Activated B cell treated with CpG ODN at 0.5 μM for 24 hours (primary cell): ENCODE measurements at regions of chr4 and their contacts with region 1.

Region 1: GRCh38 chr4:53748328-53748772 is 157.1 kb upstream of the LNX1 start:
- DNase-seq: peak; percentile 46
- ATAC-seq: peak; percentile 94
- H3K4me3 Mint-ChIP-seq: peak overlapping the region; percentile 7
- H3K27ac Mint-ChIP-seq: peak overlapping the region; percentile 84
- H3K4me1 Mint-ChIP-seq: peaks cover 63% of the 10 kb centered on the region
- H3K27me3 Mint-ChIP-seq: no peaks in the 10 kb centered on the region
- CTCF ChIP-seq: no peak

Region 2: GRCh38 chr4:53313510-53313909 is 434.8 kb before region 1 on chr4:
- CTCF ChIA-PET with region 1: no interaction called
- POLR2A ChIA-PET with region 1: no interaction called
- intact Hi-C with region 1: no loop called
- DNase-seq: no peak
- ATAC-seq: no peak
- H3K4me3 Mint-ChIP-seq: no peak overlapping the region
- H3K27ac Mint-ChIP-seq: no peak overlapping the region
- H3K4me1 Mint-ChIP-seq: peaks cover 2% of the 10 kb centered on the region
- H3K27me3 Mint-ChIP-seq: no peaks in the 10 kb centered on the region
- CTCF ChIP-seq: no peak

Region 3: DNA sequence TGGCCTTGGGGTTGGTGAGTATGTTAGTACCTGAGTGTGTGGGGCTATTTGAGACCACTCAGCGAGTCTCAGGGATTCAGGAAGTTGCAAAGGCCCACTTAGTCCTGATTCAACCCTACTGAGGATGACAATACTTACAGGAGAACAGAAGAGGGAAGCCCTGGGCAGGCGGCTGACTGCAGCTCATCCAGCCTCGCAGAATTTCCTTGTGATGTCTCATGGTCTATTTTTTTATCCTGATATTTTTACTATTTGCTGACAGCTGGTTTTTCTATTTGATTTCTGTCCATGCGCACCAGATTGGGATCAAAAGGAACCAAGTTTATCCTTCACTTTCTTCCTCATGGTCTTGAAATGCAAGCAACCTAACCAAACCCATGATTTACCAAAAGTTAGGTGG is 44.7 kb after region 1 on chr4:
- CTCF ChIA-PET with region 1: no interaction called
- POLR2A ChIA-PET with region 1: no interaction called
- intact Hi-C with region 1: no loop called
- DNase-seq: no peak
- ATAC-seq: no peak
- H3K4me3 Mint-ChIP-seq: no peak overlapping the region
- H3K27ac Mint-ChIP-seq: no peak overlapping the region
- H3K4me1 Mint-ChIP-seq: no peaks in the 10 kb centered on the region
- H3K27me3 Mint-ChIP-seq: peaks cover 11% of the 10 kb centered on the region
- CTCF ChIP-seq: no peak

Region 4: DNA sequence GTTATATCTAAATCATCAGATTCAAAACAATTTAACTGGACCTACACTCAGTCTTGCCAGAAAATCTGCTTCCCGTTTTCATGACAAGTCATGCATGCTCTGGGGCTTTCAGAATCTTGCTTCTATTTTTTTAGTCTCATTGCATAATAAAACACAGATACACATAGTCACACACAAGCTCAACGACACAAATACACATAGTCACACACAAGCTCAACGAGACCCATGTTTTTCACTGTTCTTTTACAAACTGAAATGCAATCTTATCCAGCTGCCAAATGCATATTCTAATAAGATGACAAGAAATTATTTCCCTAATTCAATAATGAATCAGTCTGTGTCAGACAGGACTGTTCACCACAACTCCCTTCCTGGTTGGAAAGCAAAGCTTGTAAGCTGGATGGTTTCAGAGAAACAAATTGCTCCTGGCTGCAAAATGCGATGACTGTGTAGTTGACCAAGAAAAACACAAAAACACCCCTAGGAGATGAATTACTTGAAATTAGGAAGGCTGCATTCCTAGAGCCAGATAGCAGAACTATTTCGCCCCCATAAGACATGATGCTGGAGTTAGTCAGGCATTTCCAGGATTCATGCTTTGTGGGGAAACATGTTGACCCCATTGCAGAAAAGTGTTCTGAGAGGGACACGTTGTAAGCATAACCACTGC is 107.4 kb after region 1 on chr4:
- CTCF ChIA-PET with region 1: no interaction called
- POLR2A ChIA-PET with region 1: no interaction called
- intact Hi-C with region 1: loop called (anchors 1 kb)
- DNase-seq: no peak
- ATAC-seq: peak; percentile 89
- H3K4me3 Mint-ChIP-seq: peak overlapping the region; percentile 53
- H3K27ac Mint-ChIP-seq: peak overlapping the region; percentile 79
- H3K4me1 Mint-ChIP-seq: peaks cover 28% of the 10 kb centered on the region
- H3K27me3 Mint-ChIP-seq: no peaks in the 10 kb centered on the region
- CTCF ChIP-seq: no peak

Region 5: GRCh38 chr4:54064295-54065111 is 316.2 kb after region 1 on chr4 and contains the start of gene CHIC2:
- CTCF ChIA-PET with region 1: no interaction called
- POLR2A ChIA-PET with region 1: interaction called, 3 read pairs
- intact Hi-C with region 1: loop called (anchors 10 kb)
- DNase-seq: peak; percentile 95
- ATAC-seq: peak; percentile 90
- H3K4me3 Mint-ChIP-seq: peak within 1 kb of the TSS; percentile 92
- H3K27ac Mint-ChIP-seq: peak within 1 kb of the TSS; percentile 87
- H3K4me1 Mint-ChIP-seq: peaks cover 47% of the 10 kb centered on the region
- H3K27me3 Mint-ChIP-seq: peaks cover 3% of the 10 kb centered on the region
- CTCF ChIP-seq: no peak
- total RNA-seq, gene CHIC2: 17.5 and 21.6 TPM in 2 replicates